ENCODE measurements at regions of chr3 and their contacts with region 1.

Region 1: DNA sequence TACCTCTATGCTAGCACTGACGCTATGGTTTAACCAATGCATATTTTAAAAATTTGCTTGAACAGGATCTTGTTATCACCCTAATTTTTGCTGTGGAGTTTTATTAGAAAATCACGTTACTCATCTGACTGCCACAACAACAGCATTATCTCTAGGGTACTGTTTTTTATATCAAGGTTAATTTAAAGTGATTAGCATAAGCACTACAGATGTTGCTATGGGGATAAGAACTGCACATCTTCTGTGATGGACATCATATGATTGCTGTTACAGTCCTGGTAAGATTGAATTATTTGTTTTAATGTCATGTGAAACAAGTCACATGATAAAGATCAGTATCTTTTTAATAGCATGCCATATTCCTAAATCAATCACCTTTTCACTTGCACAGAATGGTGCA is 492.2 kb upstream of the ROBO2 start:
- DNase-seq: no peak
- ATAC-seq: no peak
- H3K4me3 Mint-ChIP-seq: no peak overlapping the region
- H3K27ac Mint-ChIP-seq: no peak overlapping the region
- H3K4me1 Mint-ChIP-seq: no peaks in the 10 kb centered on the region
- H3K27me3 Mint-ChIP-seq: no peaks in the 10 kb centered on the region

Region 2: DNA sequence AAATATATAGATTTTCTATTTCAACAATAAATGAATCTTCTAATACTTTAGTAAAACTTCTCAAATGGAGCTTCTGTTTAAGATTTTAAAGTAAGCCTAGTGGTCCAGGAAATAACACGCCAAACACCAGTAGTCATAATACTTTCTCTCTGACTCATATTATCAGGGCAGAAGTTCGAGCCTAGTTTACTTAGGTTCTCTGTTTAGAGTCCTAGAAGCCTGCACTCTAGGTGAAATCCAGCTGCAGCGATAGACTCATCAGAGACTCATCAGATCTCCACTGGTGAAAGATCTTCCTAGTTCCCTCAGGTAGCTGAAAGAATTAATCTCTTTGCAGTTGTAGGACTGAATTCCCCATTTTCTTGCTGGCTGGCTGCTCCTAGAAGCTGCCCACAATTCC is 60.2 kb before region 1 on chr3:
- CTCF ChIA-PET with region 1: no interaction called
- POLR2A ChIA-PET with region 1: no interaction called
- intact Hi-C with region 1: loop called in 1 of 2 experiments (anchors 10 kb)
- DNase-seq: no peak
- ATAC-seq: no peak
- H3K4me3 Mint-ChIP-seq: no peak overlapping the region
- H3K27ac Mint-ChIP-seq: no peak overlapping the region
- H3K4me1 Mint-ChIP-seq: no peaks in the 10 kb centered on the region
- H3K27me3 Mint-ChIP-seq: no peaks in the 10 kb centered on the region

Region 3: GRCh38 chr3:76527773-76528172 is 19.9 kb before region 1 on chr3:
- CTCF ChIA-PET with region 1: no interaction called
- POLR2A ChIA-PET with region 1: no interaction called
- intact Hi-C with region 1: no loop called
- DNase-seq: no peak
- ATAC-seq: no peak
- H3K4me3 Mint-ChIP-seq: no peak overlapping the region
- H3K27ac Mint-ChIP-seq: no peak overlapping the region
- H3K4me1 Mint-ChIP-seq: no peaks in the 10 kb centered on the region
- H3K27me3 Mint-ChIP-seq: no peaks in the 10 kb centered on the region

Region 4: GRCh38 chr3:76638006-76638405 is 90.3 kb after region 1 on chr3:
- CTCF ChIA-PET with region 1: no interaction called
- POLR2A ChIA-PET with region 1: no interaction called
- intact Hi-C with region 1: no loop called
- DNase-seq: no peak
- ATAC-seq: no peak
- H3K4me3 Mint-ChIP-seq: no peak overlapping the region
- H3K27ac Mint-ChIP-seq: no peak overlapping the region
- H3K4me1 Mint-ChIP-seq: no peaks in the 10 kb centered on the region
- H3K27me3 Mint-ChIP-seq: no peaks in the 10 kb centered on the region